Dendritic cell treated with granulocyte-macrophage colony-stimulating factor and Interleukin-4, amounts not matched to agents 40 ng/mL and 50 ng/mL, for 4 days (primary cell): ENCODE measurements at regions of chr5 and their contacts with region 1.

Region 1: DNA sequence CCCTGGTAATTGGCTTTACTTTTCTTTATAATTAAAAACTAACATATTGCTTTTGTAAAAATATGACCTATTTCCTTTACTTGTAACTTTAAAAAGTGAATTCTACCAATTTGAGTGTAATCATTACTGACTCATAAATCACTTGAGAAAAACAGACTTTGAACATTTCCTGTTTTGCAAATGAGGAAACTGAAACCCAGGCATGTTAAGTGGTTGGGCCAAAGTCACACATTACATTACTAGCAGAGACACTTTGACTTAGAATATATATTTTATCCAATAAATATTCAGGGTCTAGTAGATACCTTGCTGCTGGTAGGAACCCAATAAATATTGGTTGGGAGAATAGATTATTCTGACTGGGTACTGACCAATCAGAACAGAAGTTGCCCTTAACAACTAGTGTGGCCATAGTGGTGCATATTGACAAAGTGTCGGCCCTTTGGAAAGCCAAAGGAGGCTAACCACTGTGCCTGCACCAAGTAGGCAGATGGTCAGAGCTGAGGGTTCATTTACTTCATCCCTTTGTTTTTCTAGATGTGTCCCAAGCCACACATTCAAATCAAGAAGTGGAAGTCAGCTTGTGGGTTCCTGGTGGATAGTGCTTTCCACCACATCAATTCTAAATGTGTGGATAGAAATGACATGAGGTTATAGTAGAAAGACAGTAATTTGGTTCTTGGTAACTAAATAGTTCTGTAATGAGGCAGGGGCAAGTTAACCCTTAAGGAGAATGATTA is 365.1 kb upstream of the RIOK2 start:
- H3K4me3 Mint-ChIP-seq: no peak overlapping the region
- H3K27ac Mint-ChIP-seq: no peak overlapping the region
- H3K4me1 Mint-ChIP-seq: peaks cover 14% of the 10 kb centered on the region
- H3K27me3 Mint-ChIP-seq: no peaks in the 10 kb centered on the region

Region 2: DNA sequence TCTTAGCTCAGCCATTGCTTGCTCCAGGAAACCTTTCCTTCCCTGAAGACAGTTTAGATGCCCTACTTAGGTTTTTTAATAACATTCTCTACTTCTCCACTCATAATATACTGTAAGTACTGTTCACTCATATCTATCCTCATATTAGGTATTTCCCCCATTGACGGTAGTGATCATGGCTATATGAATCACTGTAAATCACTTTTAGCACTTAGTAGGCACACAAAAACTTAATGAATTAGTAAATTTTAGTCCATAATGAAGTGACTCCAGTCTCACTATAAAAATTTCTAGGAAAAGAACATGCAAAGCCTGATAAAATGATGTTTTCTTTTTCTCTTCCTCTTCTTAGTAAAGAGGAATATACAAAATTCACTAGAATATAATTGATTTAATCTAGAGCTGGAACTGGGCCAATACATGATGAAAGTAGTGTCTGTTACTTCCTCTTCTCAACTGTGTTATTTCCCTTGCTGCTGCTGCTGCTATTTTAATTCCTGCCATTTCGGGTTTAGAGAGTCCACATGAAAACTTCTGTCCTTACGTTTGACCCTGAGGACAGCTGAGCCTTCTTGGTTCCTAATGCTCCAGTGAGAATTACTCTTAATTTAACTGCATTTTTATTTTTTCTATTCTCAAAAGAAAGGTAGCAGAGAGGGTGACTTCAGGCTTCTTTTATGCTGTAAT is 538.8 kb before region 1 on chr5:
- intact Hi-C with region 1: no loop called
- H3K4me3 Mint-ChIP-seq: peak overlapping the region; percentile 39
- H3K27ac Mint-ChIP-seq: peak overlapping the region; percentile 89
- H3K4me1 Mint-ChIP-seq: peaks cover 24% of the 10 kb centered on the region
- H3K27me3 Mint-ChIP-seq: no peaks in the 10 kb centered on the region

Region 3: DNA sequence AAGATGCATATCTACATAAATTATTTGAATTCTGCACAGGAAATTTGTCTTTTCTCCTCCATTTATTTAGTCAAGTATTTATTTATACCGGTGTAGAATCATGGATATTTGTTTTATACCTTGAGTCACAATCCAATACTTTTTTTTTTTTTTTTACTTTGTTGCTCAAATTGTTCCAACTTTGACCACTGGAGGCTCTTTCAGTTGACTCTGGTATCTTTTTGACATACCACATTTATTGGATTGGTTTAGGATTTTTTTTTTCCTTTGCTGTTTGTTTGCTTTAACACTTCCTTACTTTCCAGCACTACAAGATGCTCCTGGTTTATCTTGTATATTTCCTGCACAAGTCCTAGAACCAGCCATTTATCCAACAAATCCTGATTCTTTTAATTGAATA is 177.9 kb after region 1 on chr5:
- intact Hi-C with region 1: no loop called
- H3K4me3 Mint-ChIP-seq: no peak overlapping the region
- H3K27ac Mint-ChIP-seq: no peak overlapping the region
- H3K4me1 Mint-ChIP-seq: no peaks in the 10 kb centered on the region
- H3K27me3 Mint-ChIP-seq: no peaks in the 10 kb centered on the region

Region 4: DNA sequence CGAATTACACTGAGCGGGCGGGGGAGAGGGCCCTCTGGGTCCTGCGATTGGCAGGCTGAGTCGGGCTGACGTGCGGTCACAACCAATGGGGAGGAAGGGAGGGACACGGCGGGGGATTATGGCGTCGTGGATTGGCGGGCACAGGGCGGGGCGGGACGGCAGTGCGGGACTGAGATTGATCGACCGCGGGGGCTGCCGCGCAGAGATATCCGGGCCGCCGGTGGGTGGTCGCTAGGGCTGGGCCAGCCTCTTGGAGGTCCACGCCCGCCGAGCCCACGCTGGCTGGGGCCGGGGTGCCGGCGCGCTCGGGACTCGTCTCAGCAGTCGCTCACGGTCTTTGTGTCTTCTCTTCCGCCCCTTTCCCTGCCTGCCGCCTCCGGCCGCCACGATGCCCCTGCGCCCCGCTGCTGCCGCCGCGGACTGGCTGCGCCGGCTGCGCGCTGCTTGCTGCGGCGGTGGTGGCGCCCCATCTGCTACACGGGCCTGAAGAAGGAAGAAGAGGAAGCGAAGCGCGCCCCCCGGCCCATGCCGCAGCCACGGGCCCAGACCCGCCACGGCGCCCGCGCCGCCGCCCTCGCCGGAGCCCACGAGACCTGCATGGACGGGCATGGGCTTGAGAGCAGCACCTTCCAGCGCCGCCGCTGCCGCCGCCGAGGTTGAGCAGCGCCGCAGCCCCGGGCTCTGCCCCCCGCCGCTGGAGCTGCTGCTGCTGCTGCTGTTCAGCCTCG is 1225.5 kb after region 1 on chr5 and contains the start of gene RGMB:
- intact Hi-C with region 1: loop called (anchors 10 kb)
- H3K4me3 Mint-ChIP-seq: peak within 1 kb of the TSS; percentile 83
- H3K27ac Mint-ChIP-seq: peak within 1 kb of the TSS; percentile 31
- H3K4me1 Mint-ChIP-seq: peaks cover 51% of the 10 kb centered on the region
- H3K27me3 Mint-ChIP-seq: peaks cover 93% of the 10 kb centered on the region